ENCODE measurements at regions of chr5 and their contacts with region 1.

Region 1: GRCh38 chr5:32489791-32490582 is 45.4 kb upstream of the ZFR start:
- DNase-seq: peak; percentile 44 to 73 (median 66)
- ATAC-seq: peak in 3 of 4 donors; percentile 81 to 85 (median 85)
- H3K4me3 ChIP-seq: no peak overlapping the region
- H3K27ac ChIP-seq: no peak overlapping the region
- H3K4me1 ChIP-seq: no peaks in the 10 kb centered on the region
- H3K27me3 ChIP-seq: no peaks in the 10 kb centered on the region
- CTCF ChIP-seq: peak; percentile 36 to 54 (median 40)

Region 2: DNA sequence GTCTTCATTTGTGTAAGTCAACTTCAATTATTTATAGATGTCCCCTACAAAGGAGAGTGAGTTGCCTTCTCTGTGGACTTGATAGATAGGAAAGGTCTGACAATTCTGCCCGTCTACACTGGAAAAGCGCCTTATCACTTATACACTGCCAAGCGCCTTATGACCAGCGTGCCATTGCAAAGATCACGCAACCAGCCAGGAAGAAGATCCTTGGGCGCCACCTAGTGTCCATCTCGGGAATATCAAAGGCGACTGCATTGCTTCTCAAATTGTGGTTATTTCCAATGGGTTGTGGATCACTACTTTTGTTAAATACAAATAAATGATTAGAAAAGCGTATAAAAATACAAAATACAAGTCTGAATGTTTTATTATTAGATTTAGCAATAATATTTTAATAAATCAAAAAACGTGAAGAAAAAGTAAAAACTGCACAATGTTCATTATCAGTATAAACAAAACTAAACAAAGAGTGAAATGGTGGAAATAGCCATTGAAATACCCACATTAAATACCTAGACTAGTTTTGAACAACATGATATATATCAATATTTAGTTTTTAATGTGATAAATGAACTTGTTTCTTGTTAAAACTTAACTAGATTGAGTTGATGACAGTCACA is 123.2 kb after region 1 on chr5:
- intact Hi-C with region 1: loop called in 2 of 3 experiments (anchors 10 kb)
- DNase-seq: peak; percentile 54 to 91 (median 78)
- ATAC-seq: peak; percentile 84 to 98 (median 94)
- H3K4me3 ChIP-seq: no peak overlapping the region
- H3K27ac ChIP-seq: no peak overlapping the region
- H3K4me1 ChIP-seq: peaks cover 0 to 4% (median 0%) of the 10 kb centered on the region in 3 donors
- H3K27me3 ChIP-seq: no peaks in the 10 kb centered on the region
- CTCF ChIP-seq: peak; percentile 75 to 87 (median 78)

Measured in pancreas (tissue), 10 donors.